Naive thymus-derived CD4-positive, alpha-beta T cell (primary cell): ENCODE measurements at regions of chr6 and their contacts with region 1.

Region 1: GRCh38 chr6:99434702-99435530 is 9.8 kb upstream of the PNISR start:
- DNase-seq: peak in 3 of 9 donors; percentile 12 to 25 (median 16)
- ATAC-seq: peak; percentile 87
- H3K4me3 ChIP-seq: no peak overlapping the region
- H3K4me3 Mint-ChIP-seq: no peak overlapping the region
- H3K27ac ChIP-seq: no peak overlapping the region
- H3K27ac Mint-ChIP-seq: no peak overlapping the region
- H3K4me1 ChIP-seq: no peaks in the 10 kb centered on the region
- H3K4me1 Mint-ChIP-seq: peaks cover 0 to 4% (median 0%) of the 10 kb centered on the region in 7 donors
- H3K27me3 ChIP-seq: no peaks in the 10 kb centered on the region
- H3K27me3 Mint-ChIP-seq: no peaks in the 10 kb centered on the region

Region 2: GRCh38 chr6:99746261-99746895 is 311.5 kb after region 1 on chr6:
- CTCF ChIA-PET with region 1: no interaction called
- POLR2A ChIA-PET with region 1: no interaction called
- intact Hi-C with region 1: loop called (anchors 1 kb)
- DNase-seq: peak in 8 of 9 donors; percentile 31 to 63 (median 48)
- ATAC-seq: peak; percentile 86
- H3K4me3 ChIP-seq: no peak overlapping the region
- H3K4me3 Mint-ChIP-seq: no peak overlapping the region
- H3K27ac ChIP-seq: no peak overlapping the region
- H3K27ac Mint-ChIP-seq: no peak overlapping the region
- H3K4me1 ChIP-seq: no peaks in the 10 kb centered on the region
- H3K4me1 Mint-ChIP-seq: no peaks in the 10 kb centered on the region
- H3K27me3 ChIP-seq: no peaks in the 10 kb centered on the region
- H3K27me3 Mint-ChIP-seq: peaks cover 20 to 43% (median 33%) of the 10 kb centered on the region in 5 donors